Activated T-helper 1 cell treated with anti-CD3 and anti-CD28 coated beads, Interleukin-12 subunit alpha, Interleukin-12 subunit beta, Interleukin-2, Interleukin-4 antibody, amounts not matched to agents 30 ng/mL and 10 ng/mL and 1 ng/mL, durations not matched to agents 14 hours and 24 hours and 36 hours (primary cell): ENCODE measurements at regions of chr5 and their contacts with region 1.

Region 1: DNA sequence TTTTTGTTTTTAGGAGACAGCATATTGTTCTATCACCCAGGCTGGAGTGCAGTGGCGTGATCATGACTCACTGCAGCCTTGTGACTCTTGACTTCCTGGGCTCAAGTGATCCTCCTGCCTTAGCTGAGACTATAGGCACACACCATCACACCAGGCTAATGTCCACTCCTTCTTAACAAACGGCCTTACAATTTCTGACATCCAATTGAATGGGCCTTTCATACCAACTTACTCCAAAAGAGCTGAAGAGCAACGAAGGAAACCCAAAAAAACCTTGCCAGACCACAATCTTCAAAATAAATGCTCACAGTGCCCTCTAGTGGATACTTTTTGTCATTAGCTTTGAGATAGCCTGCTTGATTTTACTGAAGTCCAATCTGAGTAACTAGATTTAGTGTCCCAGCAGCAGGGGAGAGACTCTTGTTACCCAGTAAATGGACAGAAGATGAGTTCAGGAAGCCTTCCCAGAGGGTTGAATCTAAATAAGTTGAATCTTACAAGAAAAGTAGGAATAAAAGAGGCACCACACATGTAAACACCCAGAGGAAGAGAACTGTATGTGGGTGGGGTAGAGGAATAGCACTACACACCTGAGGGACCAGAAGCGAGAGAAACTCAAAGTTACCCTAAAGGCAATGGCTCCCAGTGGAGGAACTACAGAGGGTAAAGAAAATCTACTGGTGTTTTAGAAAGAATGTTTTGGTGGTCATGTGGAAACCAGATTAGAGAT is 9.3 kb downstream of the ZNF622 start:
- DNase-seq: no peak
- H3K4me3 Mint-ChIP-seq: peak overlapping the region; percentile 38
- H3K27ac Mint-ChIP-seq: peak overlapping the region; percentile 85
- H3K4me1 Mint-ChIP-seq: peaks cover 57% of the 10 kb centered on the region
- H3K27me3 Mint-ChIP-seq: no peaks in the 10 kb centered on the region

Region 2: DNA sequence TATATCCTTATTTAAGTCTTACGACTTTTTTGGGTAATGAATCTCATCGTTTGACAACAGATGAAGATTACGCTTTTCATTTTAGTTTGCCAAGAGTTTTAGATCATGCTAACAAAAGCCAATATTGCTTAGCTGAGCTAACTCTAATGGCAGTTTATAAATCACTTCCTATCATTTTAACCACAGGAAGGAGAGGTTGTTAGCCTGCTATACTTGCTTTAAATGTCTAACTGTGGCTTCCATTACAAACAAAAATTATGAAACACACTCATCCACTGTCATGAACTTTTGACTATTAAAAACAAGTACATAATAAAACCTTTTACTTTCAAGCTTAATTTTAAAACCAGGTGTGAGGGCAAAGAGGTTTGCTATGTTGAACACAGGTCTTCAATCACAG is 1530.9 kb before region 1 on chr5:
- intact Hi-C with region 1: loop called (anchors 2 kb)
- DNase-seq: no peak
- H3K4me3 Mint-ChIP-seq: peak overlapping the region; percentile 15
- H3K27ac Mint-ChIP-seq: peak overlapping the region; percentile 78
- H3K4me1 Mint-ChIP-seq: peaks cover 58% of the 10 kb centered on the region
- H3K27me3 Mint-ChIP-seq: peaks cover 2% of the 10 kb centered on the region

Region 3: DNA sequence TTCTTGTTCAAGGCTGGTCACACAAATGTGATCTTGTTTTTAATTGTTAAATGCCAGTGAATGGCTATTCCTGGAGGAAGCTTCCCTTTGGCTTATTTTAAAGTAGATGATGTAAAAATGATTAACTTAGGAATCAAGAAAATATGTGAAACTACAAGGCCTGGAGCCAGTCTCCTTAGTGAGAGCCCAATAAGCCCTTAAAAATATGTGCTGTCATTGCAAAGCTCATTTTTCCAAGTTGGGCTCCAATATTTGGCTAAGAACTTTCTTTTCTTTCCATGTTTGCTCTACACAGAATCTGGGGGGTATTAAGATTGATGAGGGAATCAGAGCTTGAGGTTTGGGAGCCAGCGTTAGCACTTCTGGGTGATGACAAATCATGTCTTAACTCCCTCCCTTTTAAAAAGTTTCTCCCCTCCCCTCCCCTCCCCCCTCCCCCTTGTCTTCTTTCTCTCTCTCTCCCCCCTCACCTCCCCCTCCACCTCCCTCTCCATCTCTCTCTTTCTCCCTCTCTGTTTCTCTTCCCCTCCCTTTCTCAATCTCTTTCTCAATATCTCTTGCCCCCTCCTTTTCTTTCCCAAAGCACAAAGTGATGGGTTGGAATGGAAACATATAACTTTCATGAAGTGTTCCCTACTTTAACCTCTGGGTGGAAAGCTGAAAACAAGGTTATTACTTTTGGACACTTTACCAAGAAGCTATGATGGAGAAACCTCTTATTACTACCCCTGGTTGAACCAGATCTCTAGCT is 870.3 kb before region 1 on chr5:
- intact Hi-C with region 1: no loop called
- DNase-seq: no peak
- H3K4me3 Mint-ChIP-seq: no peak overlapping the region
- H3K27ac Mint-ChIP-seq: no peak overlapping the region
- H3K4me1 Mint-ChIP-seq: no peaks in the 10 kb centered on the region
- H3K27me3 Mint-ChIP-seq: no peaks in the 10 kb centered on the region

Region 4: GRCh38 chr5:15983392-15983791 is 472.9 kb before region 1 on chr5:
- intact Hi-C with region 1: no loop called
- DNase-seq: no peak
- H3K4me3 Mint-ChIP-seq: no peak overlapping the region
- H3K27ac Mint-ChIP-seq: no peak overlapping the region
- H3K4me1 Mint-ChIP-seq: no peaks in the 10 kb centered on the region
- H3K27me3 Mint-ChIP-seq: no peaks in the 10 kb centered on the region

Region 5: DNA sequence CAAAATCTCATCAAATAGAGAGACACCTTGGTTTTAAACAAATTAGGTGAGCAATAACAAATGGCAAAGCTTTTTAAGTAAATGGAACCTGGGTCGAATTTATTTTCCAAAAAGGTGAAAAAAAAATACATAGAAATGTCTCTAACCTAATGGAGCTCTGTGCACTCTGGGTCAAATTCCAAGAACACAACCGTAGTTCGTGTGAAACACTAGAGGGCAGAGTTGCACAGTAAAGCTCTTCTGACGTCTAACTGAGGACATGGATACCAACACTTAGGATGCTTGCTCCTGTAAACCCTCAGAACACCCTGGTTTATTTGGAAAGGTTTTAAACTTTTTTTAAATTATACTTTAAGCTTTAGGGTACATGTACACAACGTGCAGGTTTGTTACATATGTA is 295.6 kb before region 1 on chr5:
- intact Hi-C with region 1: loop called (anchors 1 kb)
- DNase-seq: peak; percentile 10
- H3K4me3 Mint-ChIP-seq: no peak overlapping the region
- H3K27ac Mint-ChIP-seq: no peak overlapping the region
- H3K4me1 Mint-ChIP-seq: no peaks in the 10 kb centered on the region
- H3K27me3 Mint-ChIP-seq: no peaks in the 10 kb centered on the region

Region 6: DNA sequence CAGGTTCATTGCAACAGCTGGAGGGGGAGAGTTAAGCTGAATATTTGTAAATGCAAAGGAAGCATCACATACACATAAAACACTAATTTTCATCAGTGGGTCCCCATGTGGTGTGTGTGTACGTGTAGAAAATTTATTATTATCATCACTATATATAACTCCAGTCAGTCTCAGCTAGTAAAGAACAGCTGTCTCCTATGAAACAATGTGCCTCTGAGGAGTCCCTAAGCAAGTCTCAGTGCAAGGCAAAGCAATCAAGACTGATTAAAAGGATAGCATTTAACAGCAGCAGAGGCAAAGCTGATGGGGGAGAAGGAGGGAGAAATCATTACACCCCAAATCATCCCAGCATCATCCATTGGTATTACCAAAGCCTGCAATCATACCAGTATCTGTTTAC is 172.5 kb before region 1 on chr5:
- intact Hi-C with region 1: no loop called
- DNase-seq: no peak
- H3K4me3 Mint-ChIP-seq: no peak overlapping the region
- H3K27ac Mint-ChIP-seq: no peak overlapping the region
- H3K4me1 Mint-ChIP-seq: no peaks in the 10 kb centered on the region
- H3K27me3 Mint-ChIP-seq: no peaks in the 10 kb centered on the region

Region 7: DNA sequence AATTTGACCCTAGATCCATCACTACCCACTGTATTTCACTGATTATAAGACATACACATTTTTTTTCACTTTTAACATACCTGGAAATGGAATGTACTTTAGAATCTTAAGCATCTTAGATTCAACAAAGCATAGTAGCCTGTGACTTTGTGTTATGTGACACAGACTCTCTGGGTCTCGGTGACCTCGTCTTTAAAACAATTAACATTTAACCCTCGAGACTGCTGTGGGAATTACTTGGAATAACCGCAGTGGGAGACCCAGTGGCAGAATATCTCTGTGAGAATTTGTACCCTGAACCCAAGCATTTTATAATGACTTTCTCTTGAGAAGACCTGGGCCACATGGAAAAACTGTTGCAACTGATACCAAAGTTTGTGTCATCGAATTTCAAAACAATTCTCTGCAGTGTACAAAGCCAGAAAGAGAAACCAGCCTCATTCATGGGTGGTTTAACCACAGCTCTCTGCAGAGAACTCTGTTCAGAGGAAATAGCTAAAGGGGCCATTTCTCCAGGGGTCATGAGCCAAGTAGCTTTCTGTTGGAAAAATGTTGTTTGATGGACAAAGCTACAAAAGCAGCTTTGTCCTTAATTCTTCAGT is 170.5 kb after region 1 on chr5:
- intact Hi-C with region 1: loop called (anchors 2 kb)
- DNase-seq: peak; percentile 43
- H3K4me3 Mint-ChIP-seq: peak overlapping the region; percentile 28
- H3K27ac Mint-ChIP-seq: peak overlapping the region; percentile 45
- H3K4me1 Mint-ChIP-seq: peaks cover 43% of the 10 kb centered on the region
- H3K27me3 Mint-ChIP-seq: no peaks in the 10 kb centered on the region

Region 8: DNA sequence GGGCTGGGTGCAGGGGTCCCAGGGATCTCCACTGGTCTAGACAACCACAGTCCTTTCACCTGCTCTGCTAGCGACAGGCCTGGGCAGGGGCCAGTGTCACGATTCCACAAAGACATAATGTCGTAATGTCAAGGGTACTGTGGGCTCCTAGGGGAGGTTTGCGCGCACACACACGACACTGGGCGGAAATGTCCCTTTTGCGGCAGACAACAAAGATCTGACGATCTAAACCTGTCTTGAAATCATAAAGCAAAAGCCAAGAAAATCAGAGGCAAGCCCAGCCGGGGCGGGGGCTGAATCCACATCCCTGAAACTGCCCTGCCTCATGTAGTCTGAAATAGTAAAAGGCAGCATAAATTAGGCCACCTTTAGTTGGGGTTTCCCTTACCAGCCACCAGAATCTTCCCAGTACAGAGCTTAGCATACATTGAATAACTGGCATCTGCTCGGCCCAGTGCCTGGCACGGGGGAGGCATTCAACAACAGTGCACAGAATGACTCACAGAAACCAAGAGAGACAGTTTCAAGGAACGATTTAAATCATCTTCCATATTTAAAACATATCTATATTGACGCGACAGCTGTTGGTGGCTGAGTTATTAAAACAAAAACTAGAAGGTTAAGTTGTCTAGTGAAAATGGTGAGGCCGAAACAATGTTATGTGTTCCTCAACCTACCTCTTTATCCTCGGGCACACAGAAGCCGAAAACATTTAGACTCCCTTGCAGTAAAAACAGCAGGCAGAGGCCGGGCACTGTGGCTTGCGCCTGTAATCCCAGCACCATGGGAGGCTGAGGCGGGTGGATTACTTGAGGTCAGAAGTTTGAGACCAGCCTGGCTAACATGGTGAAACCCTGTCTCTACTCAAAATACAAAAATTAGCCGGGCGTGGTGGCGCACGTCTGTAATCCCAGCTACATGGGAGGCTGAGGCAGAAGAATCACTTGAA is 328.8 kb after region 1 on chr5:
- intact Hi-C with region 1: loop called (anchors 2 kb)
- DNase-seq: no peak
- H3K4me3 Mint-ChIP-seq: no peak overlapping the region
- H3K27ac Mint-ChIP-seq: no peak overlapping the region
- H3K4me1 Mint-ChIP-seq: no peaks in the 10 kb centered on the region
- H3K27me3 Mint-ChIP-seq: peaks cover 2% of the 10 kb centered on the region

Region 9: DNA sequence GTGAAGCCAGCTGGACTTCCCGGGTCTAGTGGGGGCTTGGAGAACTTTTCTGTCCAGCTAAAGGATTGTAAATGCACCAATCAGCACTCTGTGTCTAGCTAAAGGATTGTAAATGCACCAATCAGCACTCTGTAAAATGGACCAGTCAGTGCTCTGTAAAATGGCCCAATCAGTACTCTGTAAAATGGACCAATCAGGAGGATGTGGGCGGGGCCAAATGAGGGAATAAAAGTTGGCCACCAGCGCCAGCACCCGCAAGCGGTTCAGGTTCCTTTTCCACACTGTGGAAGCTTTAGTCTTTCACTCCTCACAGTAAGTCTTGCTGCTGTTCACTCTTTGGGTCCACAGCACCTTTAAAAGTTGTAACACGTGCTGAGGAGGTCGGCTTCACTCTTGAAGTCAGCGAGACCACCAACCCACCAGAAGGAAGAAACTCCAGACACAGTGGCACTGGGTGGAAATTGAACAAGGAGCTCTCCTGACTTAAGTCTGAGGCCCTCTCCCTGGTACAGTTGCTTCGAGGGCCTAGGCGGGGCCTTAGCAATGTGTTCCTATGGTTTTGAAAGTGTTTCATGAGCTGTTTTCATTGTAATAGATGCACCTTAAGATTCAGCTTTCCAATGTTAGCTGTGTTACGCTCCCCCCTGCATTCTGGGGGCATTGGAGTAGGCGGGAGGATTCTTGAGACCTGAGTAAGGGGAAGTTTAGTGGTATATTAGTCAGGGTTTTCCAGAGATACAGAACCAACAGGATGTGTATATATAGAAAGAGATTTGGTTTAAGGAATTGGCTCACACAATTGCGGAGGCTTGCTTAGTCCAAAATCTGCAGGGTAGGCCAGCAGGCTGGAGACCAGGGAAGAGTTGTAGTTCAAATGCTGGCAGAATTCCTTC is 501.3 kb after region 1 on chr5:
- intact Hi-C with region 1: no loop called
- DNase-seq: no peak
- H3K4me3 Mint-ChIP-seq: no peak overlapping the region
- H3K27ac Mint-ChIP-seq: no peak overlapping the region
- H3K4me1 Mint-ChIP-seq: no peaks in the 10 kb centered on the region
- H3K27me3 Mint-ChIP-seq: no peaks in the 10 kb centered on the region